WTC11 (cell line): ENCODE measurements at regions of chr2 and their contacts with region 1.

Region 1: DNA sequence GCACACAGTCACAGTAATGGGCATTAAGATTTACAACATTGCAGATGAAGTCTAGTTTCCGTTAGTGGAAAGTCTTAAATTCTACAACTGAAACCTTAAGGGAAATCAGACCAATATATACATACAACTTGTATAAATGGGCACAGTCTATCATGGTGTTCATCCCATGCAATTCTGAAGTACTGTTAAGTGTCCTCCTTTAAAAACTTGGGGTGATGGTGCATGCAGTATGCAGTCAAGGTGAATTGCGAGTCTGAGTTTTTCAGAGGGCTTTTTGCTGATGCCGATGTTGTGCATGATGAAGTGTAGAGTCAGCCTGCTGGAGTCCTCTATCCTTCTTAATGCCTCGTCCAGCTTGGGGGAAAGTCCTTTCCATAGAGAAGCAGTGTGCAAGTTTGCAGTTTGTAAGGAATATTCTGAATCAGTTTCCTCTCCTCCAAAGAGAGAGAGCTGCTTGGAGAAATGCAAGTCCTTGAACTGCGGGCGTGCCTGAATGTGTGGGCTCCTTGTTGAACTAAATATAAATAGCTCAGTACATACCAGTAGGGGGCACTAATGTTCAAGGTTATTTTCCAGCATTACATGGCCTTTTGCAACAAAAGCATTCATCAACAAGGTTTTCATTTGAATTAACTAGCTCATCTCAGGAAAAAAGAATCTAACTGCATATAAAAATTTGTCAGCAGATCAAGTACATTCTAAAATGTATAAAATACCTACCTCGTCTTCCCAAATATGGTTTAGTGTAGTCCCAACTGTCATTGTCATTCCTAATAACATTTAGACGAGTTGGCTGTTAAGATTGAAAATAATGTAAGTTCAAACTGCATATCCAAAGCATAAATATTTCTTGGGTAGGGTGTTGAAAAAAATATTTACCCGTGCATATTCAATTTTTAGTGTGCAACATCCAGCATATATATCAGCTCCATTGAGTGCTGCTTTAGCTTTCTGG is 21.3 kb downstream of the HNRNPLL start:
- DNase-seq: peak; percentile 31
- ATAC-seq: peak; percentile 90
- H3K4me3 Mint-ChIP-seq: no peak overlapping the region; the same call in 1 of the 2 replicates
- H3K27ac Mint-ChIP-seq: peak overlapping the region; percentile 84
- H3K4me1 Mint-ChIP-seq: peaks cover 42% of the 10 kb centered on the region
- H3K27me3 Mint-ChIP-seq: no peaks in the 10 kb centered on the region
- CTCF ChIP-seq: peak; percentile 53; the same call in 1 of the 2 replicates

Region 2: DNA sequence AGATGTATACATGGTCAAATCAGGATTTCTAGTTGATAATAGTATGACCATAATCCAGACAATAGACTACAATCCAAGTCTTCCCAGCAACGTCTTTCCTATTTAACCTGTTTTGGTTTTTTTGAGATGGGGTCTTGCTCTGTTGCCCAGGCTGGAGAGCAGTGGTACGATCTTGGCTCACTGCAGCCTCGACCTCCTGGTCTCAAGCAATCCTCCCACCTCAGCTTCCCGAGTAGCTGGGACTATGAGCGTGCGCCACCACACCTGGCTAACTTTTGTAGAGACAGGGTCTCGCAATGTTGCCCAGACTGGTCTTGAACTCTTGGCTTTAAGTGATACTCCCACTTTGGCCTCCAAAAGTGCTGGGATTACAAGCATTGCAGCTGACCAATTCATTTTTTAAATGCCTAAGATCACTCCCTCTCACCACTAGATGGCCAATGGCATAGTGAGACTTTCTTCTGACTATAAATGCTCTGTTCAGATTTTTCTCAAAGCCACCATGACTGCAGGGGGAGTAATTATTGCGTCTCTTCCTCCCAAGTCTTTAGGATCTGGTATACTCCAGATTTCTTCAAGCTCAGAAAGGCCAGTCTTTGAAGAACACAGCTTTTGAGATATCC is 26.4 kb before region 1 on chr2:
- CTCF ChIA-PET with region 1: interaction called, 22 read pairs
- POLR2A ChIA-PET with region 1: no interaction called
- DNase-seq: no peak
- ATAC-seq: peak; percentile 76
- H3K4me3 Mint-ChIP-seq: no peak overlapping the region
- H3K27ac Mint-ChIP-seq: no peak overlapping the region
- H3K4me1 Mint-ChIP-seq: no peaks in the 10 kb centered on the region
- H3K27me3 Mint-ChIP-seq: no peaks in the 10 kb centered on the region
- CTCF ChIP-seq: peak; percentile 22; the same call in 1 of the 2 replicates

Region 3: GRCh38 chr2:38602732-38603401 is 21.4 kb after region 1 on chr2 and contains the start of gene HNRNPLL:
- CTCF ChIA-PET with region 1: interaction called, 27 read pairs
- POLR2A ChIA-PET with region 1: interaction called, 16 read pairs
- DNase-seq: peak; percentile 99
- ATAC-seq: peak; percentile 88
- H3K4me3 Mint-ChIP-seq: peak within 1 kb of the TSS; percentile 90
- H3K27ac Mint-ChIP-seq: peak within 1 kb of the TSS; percentile 96
- H3K4me1 Mint-ChIP-seq: peaks cover 48% of the 10 kb centered on the region
- H3K27me3 Mint-ChIP-seq: no peaks in the 10 kb centered on the region
- CTCF ChIP-seq: no peak
- total RNA-seq, gene HNRNPLL: 63.1 to 66.4 TPM (median 65.3 TPM) in 3 replicates

Region 4: GRCh38 chr2:38672445-38673391 is 91.2 kb after region 1 on chr2:
- CTCF ChIA-PET with region 1: interaction called, 12 read pairs
- POLR2A ChIA-PET with region 1: interaction called, 3 read pairs
- DNase-seq: no peak
- ATAC-seq: no peak
- H3K4me3 Mint-ChIP-seq: no peak overlapping the region
- H3K27ac Mint-ChIP-seq: no peak overlapping the region; the same call in 1 of the 2 replicates
- H3K4me1 Mint-ChIP-seq: peaks cover 24% of the 10 kb centered on the region
- H3K27me3 Mint-ChIP-seq: no peaks in the 10 kb centered on the region
- CTCF ChIP-seq: no peak

Region 5: DNA sequence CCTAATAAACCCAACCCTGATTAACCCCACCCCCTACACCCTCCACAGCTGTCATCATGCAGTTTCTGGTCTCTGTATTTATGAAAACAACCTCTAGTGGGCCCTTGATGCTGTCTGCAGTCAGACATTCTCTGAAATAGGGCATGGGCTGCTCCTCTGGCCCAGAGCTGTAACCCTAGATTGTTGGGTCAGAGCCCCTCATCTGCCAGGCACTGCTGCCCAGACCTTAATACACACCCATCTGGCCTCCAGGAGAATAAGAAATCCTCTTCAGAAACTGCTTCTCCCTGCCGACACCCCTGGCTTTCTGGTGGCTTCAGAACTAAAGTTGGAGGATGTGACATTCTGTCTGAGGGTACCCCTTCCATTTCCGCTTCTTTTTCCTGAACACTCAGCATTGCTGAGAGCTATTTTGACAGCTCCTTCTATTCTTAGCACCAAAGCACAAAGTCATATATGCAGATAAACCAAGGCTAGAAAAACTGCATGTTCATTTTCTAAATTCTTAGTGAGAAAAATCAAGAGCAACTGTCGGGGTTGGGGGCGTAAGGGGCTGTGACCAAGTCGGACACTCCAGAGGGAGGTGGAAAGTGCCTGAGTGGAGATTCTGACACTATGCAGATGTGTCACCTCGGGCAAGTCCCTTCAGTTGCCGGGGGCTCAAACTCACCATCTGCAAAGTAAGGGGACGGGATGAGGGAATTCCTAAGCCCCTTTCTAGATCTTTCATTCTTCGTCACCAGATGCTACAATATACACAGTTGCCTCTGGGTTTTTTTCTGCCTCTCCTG is 141.0 kb after region 1 on chr2:
- CTCF ChIA-PET with region 1: interaction called, 30 read pairs
- POLR2A ChIA-PET with region 1: interaction called, 4 read pairs
- DNase-seq: no peak
- ATAC-seq: peak; percentile 51; the same call in 1 of the 2 replicates
- H3K4me3 Mint-ChIP-seq: no peak overlapping the region
- H3K27ac Mint-ChIP-seq: peak overlapping the region; percentile 80; the same call in 1 of the 2 replicates
- H3K4me1 Mint-ChIP-seq: no peaks in the 10 kb centered on the region
- H3K27me3 Mint-ChIP-seq: no peaks in the 10 kb centered on the region
- CTCF ChIP-seq: no peak

Region 6: DNA sequence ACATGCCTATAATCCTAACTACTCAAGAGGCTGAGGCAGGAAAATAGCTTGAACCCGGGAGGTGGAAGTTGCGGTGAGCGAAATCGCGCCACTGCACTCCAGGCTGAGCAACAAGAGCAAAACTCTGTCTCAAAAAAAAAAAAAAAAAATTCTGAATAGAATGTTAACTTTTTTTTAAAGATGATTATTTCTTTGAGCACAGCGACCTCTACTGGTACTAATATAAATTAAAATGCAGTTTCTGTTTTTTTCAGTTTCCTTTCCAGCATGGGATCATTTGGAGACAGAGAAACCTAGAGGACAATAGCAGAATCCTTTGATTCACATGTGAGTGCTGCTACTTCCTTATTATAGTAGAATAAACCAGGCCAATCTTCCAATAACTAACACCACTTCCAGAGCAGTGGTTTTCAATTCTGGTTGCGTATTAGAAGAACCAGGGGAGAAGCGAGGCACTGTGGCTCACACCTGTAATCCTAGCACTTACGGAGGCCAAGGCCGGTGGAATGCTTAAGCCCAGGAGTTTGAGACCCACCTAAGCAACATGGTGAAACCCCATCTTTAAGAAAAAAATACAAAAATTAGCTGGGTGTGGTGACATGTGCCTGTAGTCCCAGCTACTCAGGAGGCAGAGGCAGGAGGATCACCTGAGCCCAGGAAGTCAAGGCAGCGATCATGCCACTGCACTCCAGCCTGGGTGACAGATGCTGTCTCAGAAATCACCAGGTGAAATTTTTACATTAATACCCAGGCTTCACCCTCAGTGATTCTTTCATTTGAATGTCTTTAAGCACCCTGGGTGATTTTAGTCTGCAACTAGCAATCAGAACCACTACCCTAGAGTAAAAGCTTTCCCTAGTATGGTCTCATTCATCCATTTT is 159.6 kb after region 1 on chr2:
- CTCF ChIA-PET with region 1: interaction called, 14 read pairs
- POLR2A ChIA-PET with region 1: interaction called, 3 read pairs
- DNase-seq: no peak
- ATAC-seq: peak; percentile 22
- H3K4me3 Mint-ChIP-seq: no peak overlapping the region
- H3K27ac Mint-ChIP-seq: peak overlapping the region; percentile 81
- H3K4me1 Mint-ChIP-seq: peaks cover 22% of the 10 kb centered on the region
- H3K27me3 Mint-ChIP-seq: peaks cover 3% of the 10 kb centered on the region; the same call in 1 of the 2 replicates
- CTCF ChIP-seq: peak; percentile 67